Activated T-helper 2 cell treated with anti-CD3 and anti-CD28 coated beads, Interferon-gamma antibody, Interleukin-2, Interleukin-4, amounts not matched to agents 10 μg/mL and 5 μg/mL and 100 μg/mL, durations not matched to agents 14 hours and 24 hours and 36 hours (primary cell): ENCODE measurements at regions of chr12 and their contacts with region 1.

Region 1: GRCh38 chr12:65121049-65121955 is at the start of gene WIF1:
- DNase-seq: no peak
- H3K4me3 Mint-ChIP-seq: peak within 1 kb of the TSS; percentile 37
- H3K27ac Mint-ChIP-seq: no peak within 1 kb of the TSS
- H3K4me1 Mint-ChIP-seq: peaks cover 5% of the 10 kb centered on the region
- H3K27me3 Mint-ChIP-seq: peaks cover 34% of the 10 kb centered on the region
- total RNA-seq, gene WIF1: not detected in 2 replicates

Region 2: GRCh38 chr12:64796208-64796845 is 325.0 kb before region 1 on chr12:
- intact Hi-C with region 1: loop called (anchors 1 kb)
- DNase-seq: peak; percentile 35
- H3K4me3 Mint-ChIP-seq: no peak overlapping the region
- H3K27ac Mint-ChIP-seq: no peak overlapping the region
- H3K4me1 Mint-ChIP-seq: peaks cover 1% of the 10 kb centered on the region
- H3K27me3 Mint-ChIP-seq: peaks cover 38% of the 10 kb centered on the region

Region 3: GRCh38 chr12:64991121-64991611 is 130.1 kb before region 1 on chr12:
- intact Hi-C with region 1: no loop called
- DNase-seq: no peak
- H3K4me3 Mint-ChIP-seq: no peak overlapping the region
- H3K27ac Mint-ChIP-seq: no peak overlapping the region
- H3K4me1 Mint-ChIP-seq: no peaks in the 10 kb centered on the region
- H3K27me3 Mint-ChIP-seq: peaks cover 5% of the 10 kb centered on the region

Region 4: DNA sequence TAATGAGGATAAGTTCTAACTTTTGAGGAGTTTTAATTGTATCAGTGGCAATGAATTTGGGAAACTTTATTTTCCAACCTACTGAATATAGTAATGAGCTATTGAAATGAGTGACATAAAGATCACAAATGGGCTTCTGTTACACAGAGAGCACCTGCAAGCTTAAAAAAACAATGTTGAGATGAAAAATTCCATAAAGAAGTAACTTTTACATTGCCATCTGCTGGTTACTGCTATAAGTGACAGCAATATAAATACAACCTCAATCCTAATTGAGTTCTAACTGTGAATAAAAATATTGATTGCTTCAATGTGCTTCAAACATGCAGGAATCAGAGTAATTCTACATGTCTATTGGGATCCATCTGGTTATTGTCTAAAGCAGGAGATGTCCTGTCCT is 14.4 kb before region 1 on chr12:
- intact Hi-C with region 1: no loop called
- DNase-seq: no peak
- H3K4me3 Mint-ChIP-seq: no peak overlapping the region
- H3K27ac Mint-ChIP-seq: no peak overlapping the region
- H3K4me1 Mint-ChIP-seq: no peaks in the 10 kb centered on the region
- H3K27me3 Mint-ChIP-seq: peaks cover 19% of the 10 kb centered on the region